Dendritic cell treated with granulocyte-macrophage colony-stimulating factor and Interleukin-4, amounts not matched to agents 40 ng/mL and 50 ng/mL, for 4 days (primary cell): ENCODE measurements at regions of chr4 and their contacts with region 1.

Region 1: GRCh38 chr4:139015269-139015947 is at the start of gene NOCT:
- H3K4me3 Mint-ChIP-seq: peak within 1 kb of the TSS; percentile 79
- H3K27ac Mint-ChIP-seq: peak within 1 kb of the TSS; percentile 98
- H3K4me1 Mint-ChIP-seq: peaks cover 40% of the 10 kb centered on the region
- H3K27me3 Mint-ChIP-seq: no peaks in the 10 kb centered on the region

Region 2: DNA sequence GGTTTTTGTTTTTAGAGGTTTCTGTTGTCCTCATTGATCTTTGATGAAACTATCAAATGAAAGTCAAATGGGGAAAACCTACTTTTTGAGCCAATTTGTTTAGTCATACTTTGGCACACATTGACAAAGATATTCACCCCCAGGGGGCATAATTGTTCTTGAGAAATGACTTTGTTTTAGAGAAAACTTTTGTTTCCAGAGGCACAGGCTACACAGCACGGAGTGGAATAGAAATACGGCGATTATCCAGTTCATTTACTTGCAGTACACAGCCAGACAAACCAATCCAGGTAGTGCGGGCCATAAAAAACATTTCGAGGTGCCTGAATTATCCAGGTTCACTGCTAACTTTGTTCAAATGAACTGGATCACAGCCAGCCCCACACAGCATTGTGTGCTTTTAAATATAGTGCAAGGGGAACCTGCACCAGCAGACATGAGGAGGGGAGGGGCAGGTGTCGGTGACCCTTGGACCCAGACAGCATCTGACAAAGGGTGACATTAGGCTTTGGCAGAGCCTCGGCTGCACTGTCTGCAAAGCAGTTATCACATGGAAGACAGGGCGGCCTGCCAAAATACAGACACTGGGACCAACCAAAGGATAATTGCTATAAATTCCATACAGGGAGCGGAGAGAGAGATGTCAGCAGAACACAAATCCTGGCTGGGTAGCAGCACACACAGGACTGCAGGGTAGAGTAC is 179.4 kb before region 1 on chr4:
- intact Hi-C with region 1: no loop called
- H3K4me3 Mint-ChIP-seq: no peak overlapping the region
- H3K27ac Mint-ChIP-seq: no peak overlapping the region
- H3K4me1 Mint-ChIP-seq: peaks cover 14% of the 10 kb centered on the region
- H3K27me3 Mint-ChIP-seq: peaks cover 2% of the 10 kb centered on the region

Region 3: DNA sequence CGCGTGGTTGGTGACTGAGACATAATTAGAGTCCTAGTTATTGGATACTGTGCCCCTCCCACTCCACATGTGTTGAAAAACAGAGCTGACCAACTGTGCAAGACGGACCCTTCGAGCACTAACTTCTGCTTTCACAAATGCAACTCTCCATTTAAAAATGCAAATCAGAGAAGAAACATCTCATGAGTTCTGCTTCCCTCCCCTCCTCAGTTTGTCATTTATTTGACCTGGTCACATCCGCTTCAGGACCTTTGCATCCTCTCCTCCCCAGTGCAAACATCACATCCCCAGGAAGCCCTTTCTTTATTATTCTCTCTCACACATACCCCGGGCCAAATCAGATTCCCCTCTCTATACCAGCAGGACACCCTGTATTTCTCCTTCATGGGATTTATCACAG is 37.9 kb before region 1 on chr4:
- intact Hi-C with region 1: loop called (anchors 5 kb)
- H3K4me3 Mint-ChIP-seq: peak overlapping the region; percentile 4
- H3K27ac Mint-ChIP-seq: peak overlapping the region; percentile 1
- H3K4me1 Mint-ChIP-seq: peaks cover 36% of the 10 kb centered on the region
- H3K27me3 Mint-ChIP-seq: no peaks in the 10 kb centered on the region

Region 4: GRCh38 chr4:139083956-139084803 is 68.8 kb after region 1 on chr4:
- intact Hi-C with region 1: loop called (anchors 1 kb)
- H3K4me3 Mint-ChIP-seq: peak overlapping the region; percentile 100
- H3K27ac Mint-ChIP-seq: peak overlapping the region; percentile 100
- H3K4me1 Mint-ChIP-seq: peaks cover 16% of the 10 kb centered on the region
- H3K27me3 Mint-ChIP-seq: no peaks in the 10 kb centered on the region